ENCODE measurements at regions of chr3 and their contacts with region 1.

Region 1: GRCh38 chr3:40329071-40329470 is 19.6 kb downstream of the EIF1B start:
- DNase-seq: no peak
- ATAC-seq: no peak
- H3K4me3 ChIP-seq: no peak overlapping the region
- H3K27ac ChIP-seq: no peak overlapping the region
- H3K4me1 ChIP-seq: no peaks in the 10 kb centered on the region
- CTCF ChIP-seq: no peak
- EP300 ChIP-seq: no peak
- POLR2A ChIP-seq: no peak
- RAD21 ChIP-seq: no peak

Region 2: GRCh38 chr3:40211579-40211978 is 117.5 kb before region 1 on chr3:
- CTCF ChIA-PET with region 1: no interaction called
- POLR2A ChIA-PET with region 1: no interaction called
- DNase-seq: no peak
- ATAC-seq: no peak
- H3K4me3 ChIP-seq: no peak overlapping the region
- H3K27ac ChIP-seq: no peak overlapping the region
- H3K4me1 ChIP-seq: no peaks in the 10 kb centered on the region
- CTCF ChIP-seq: no peak
- EP300 ChIP-seq: no peak
- POLR2A ChIP-seq: no peak
- RAD21 ChIP-seq: no peak

Region 3: GRCh38 chr3:40267937-40268723 is 60.9 kb before region 1 on chr3:
- CTCF ChIA-PET with region 1: no interaction called
- POLR2A ChIA-PET with region 1: no interaction called
- DNase-seq: no peak
- ATAC-seq: no peak
- H3K4me3 ChIP-seq: no peak overlapping the region
- H3K27ac ChIP-seq: no peak overlapping the region
- H3K4me1 ChIP-seq: no peaks in the 10 kb centered on the region
- CTCF ChIP-seq: no peak
- EP300 ChIP-seq: no peak
- POLR2A ChIP-seq: no peak
- RAD21 ChIP-seq: no peak

Region 4: GRCh38 chr3:40317061-40317855 is 11.8 kb before region 1 on chr3:
- CTCF ChIA-PET with region 1: interaction called, 13 read pairs
- POLR2A ChIA-PET with region 1: no interaction called
- DNase-seq: peak; percentile 31 to 58
- ATAC-seq: peak; percentile 70 to 90; a peak in 4 of 6 replicates
- H3K4me3 ChIP-seq: no peak overlapping the region
- H3K27ac ChIP-seq: no peak overlapping the region
- H3K4me1 ChIP-seq: no peaks in the 10 kb centered on the region
- CTCF ChIP-seq: peak; percentile 67
- EP300 ChIP-seq: no peak
- POLR2A ChIP-seq: no peak
- RAD21 ChIP-seq: peak; percentile 71 to 77

Region 5: GRCh38 chr3:40355410-40355809 is 26.3 kb after region 1 on chr3:
- CTCF ChIA-PET with region 1: no interaction called
- POLR2A ChIA-PET with region 1: no interaction called
- DNase-seq: no peak
- ATAC-seq: no peak
- H3K4me3 ChIP-seq: no peak overlapping the region
- H3K27ac ChIP-seq: no peak overlapping the region
- H3K4me1 ChIP-seq: no peaks in the 10 kb centered on the region
- CTCF ChIP-seq: no peak
- EP300 ChIP-seq: no peak
- POLR2A ChIP-seq: no peak
- RAD21 ChIP-seq: no peak